Common myeloid progenitor, CD34-positive (primary cell): ENCODE measurements at regions of chr14 and their contacts with region 1.

Region 1: DNA sequence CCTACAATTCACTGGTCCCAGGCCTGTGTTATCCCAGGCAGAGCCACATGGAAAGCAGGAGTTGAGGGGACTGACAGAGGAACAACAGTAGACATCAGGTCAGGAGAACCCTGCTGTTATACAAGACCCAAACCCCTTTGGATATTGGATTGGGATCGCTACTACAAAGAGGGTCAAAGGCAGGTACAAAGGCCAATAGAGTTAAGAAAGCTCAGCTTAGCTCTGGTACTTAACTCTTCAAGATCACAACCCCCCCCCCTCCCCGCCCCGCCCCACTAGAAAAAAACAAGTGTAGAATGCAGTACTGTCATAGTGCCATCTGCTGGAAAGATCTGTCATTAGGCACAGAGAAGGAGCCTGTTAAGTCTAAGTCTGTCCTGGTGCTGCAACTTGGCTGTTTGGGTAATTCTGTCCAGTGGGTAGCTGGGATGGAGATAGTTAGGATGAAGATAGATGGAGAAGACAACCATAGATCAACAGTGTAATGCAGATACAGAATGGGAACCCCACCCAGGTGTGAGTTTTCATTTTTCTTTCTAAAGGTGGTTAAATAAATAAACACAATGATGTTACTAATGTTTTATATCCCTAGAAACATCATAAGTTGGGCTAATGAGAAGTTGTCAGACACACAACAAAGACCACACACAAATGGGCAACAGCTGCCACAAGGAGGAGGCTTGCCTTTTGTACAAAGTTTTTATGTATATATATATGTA is 17.2 kb downstream of the REM2 start:
- DNase-seq: peak; percentile 72 to 84 (median 79)
- H3K4me3 ChIP-seq: no peak overlapping the region
- H3K27ac ChIP-seq: no peak overlapping the region
- H3K4me1 ChIP-seq: no peaks in the 10 kb centered on the region
- H3K27me3 ChIP-seq: peaks cover 0 to 2% (median 0%) of the 10 kb centered on the region in 5 experiments

Region 2: DNA sequence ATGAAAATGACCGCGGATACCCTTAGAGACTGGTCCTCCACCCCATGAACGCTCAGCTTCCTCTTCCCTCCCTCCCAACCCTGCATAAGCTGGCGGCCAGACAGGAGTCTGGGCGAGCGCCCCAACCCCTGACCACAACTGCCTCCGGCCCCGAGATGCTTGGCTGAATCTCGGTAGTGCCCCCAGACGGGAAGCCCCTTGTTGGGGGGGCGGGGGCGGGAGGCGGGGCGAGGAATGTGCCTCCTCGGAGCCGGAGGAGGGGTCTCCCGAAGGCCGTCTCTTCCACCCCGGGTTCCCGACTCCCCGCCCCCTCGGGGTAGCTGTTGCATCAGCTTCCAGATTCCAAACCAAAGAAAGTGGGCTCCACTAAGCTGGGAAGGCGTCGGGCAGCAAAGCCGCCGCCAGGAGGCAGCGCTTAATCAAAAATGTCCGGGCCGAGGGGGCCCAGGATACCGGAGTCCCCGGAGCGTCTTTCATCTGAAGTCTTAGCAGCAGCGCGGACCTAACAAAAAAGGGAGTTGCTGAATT is 77.6 kb before region 1 on chr14:
- CTCF ChIA-PET with region 1: interaction called, 41 read pairs
- POLR2A ChIA-PET with region 1: no interaction called
- DNase-seq: peak; percentile 70 to 74 (median 73)
- H3K4me3 ChIP-seq: peak overlapping the region in 6 of 7 experiments; percentile 20 to 62 (median 42)
- H3K27ac ChIP-seq: no peak overlapping the region
- H3K4me1 ChIP-seq: peaks cover 12 to 38% (median 36%) of the 10 kb centered on the region in 4 experiments
- H3K27me3 ChIP-seq: peaks cover 0 to 29% (median 2%) of the 10 kb centered on the region in 5 experiments

Region 3: GRCh38 chr14:22872033-22872832 is 28.0 kb before region 1 on chr14:
- CTCF ChIA-PET with region 1: interaction called, 75 read pairs
- POLR2A ChIA-PET with region 1: no interaction called
- DNase-seq: peak; percentile 61 to 65 (median 62)
- H3K4me3 ChIP-seq: peak overlapping the region; percentile 59 to 91 (median 78)
- H3K27ac ChIP-seq: peak overlapping the region; percentile 29 to 82
- H3K4me1 ChIP-seq: peaks cover 8 to 24% (median 22%) of the 10 kb centered on the region in 4 experiments
- H3K27me3 ChIP-seq: peaks cover 0 to 2% (median 0%) of the 10 kb centered on the region in 5 experiments

Region 4: DNA sequence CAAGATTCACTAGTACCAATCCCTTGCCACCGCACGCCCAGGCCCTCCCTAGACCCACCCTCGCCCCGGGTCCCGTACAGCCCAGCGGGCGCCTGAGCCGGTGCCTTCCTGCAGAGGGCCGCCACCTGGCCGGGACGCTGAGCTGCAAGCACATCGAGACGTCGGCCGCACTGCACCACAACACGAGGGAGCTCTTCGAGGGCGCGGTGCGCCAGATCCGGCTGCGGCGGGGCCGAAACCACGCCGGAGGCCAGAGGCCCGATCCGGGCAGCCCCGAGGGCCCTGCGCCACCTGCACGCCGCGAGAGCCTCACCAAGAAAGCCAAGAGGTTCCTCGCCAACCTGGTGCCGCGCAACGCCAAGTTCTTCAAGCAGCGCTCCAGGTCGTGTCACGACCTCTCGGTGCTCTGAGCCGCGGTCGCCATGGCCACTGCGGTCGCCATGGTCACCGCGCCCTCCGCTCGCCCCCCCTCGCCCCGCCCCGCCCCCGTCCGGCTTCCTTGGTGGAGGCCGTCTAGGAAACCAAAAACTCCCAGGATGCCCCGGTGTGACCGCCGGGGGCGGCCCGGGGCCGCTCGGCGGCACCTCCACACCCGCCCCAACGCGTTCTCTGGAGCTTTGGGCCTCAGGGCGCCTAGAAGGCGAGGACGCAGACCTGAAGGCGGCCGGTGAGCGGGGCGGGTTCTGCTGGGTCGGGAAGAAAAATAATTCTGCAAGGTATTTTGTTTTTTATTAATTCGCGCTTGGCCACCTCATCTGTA is 13.6 kb before region 1 on chr14:
- CTCF ChIA-PET with region 1: interaction called, 143 read pairs
- POLR2A ChIA-PET with region 1: no interaction called
- DNase-seq: peak; percentile 67 to 87 (median 79)
- H3K4me3 ChIP-seq: peak overlapping the region in 3 of 7 experiments; percentile 44 to 51 (median 46)
- H3K27ac ChIP-seq: peak overlapping the region in 1 of 2 experiments; percentile 55
- H3K4me1 ChIP-seq: peaks cover 0 to 24% (median 15%) of the 10 kb centered on the region in 4 experiments
- H3K27me3 ChIP-seq: peaks cover 0 to 59% (median 17%) of the 10 kb centered on the region in 5 experiments

Region 5: GRCh38 chr14:22910916-22911315 is 10.7 kb after region 1 on chr14:
- CTCF ChIA-PET with region 1: interaction called, 15 read pairs
- POLR2A ChIA-PET with region 1: no interaction called
- DNase-seq: no peak
- H3K4me3 ChIP-seq: no peak overlapping the region
- H3K27ac ChIP-seq: no peak overlapping the region
- H3K4me1 ChIP-seq: peaks cover 0 to 4% (median 2%) of the 10 kb centered on the region in 4 experiments
- H3K27me3 ChIP-seq: no peaks in the 10 kb centered on the region